Colonic mucosa (tissue), 4 donors: ENCODE measurements at regions of chr12 and their contacts with region 1.

Region 1: DNA sequence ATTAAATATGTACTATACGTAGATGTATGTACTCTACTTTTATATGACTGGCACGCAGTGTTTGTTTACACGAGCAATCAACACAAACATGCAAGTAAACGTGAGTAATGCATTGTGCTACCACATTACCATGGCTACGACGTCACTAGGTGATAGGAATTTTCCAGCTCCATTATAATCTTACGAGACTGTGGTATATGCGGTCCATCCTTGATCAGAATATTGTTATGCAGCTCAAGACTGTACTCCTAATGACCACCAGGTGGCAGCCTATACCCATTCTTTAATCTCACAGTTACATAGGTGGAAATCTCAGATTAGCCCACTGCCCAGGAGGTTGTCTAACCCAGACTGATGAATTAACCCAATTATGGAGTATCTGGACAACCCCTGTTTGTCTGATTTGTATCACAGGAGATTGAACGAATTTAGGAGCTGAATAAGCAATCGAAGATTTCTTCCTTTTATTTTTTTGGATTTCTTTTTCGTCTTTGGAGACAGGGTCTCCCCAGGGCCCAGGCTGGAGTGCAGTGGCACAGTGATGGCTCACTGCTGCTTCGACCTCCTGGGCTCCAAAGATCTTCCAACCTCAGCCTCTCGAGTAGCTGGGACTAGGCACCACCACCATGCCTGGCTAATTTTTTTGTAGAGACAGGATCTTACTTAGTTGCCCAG is 8.7 kb upstream of the TESPA1 start:
- DNase-seq: peak; percentile 50
- H3K4me3 ChIP-seq: no peak overlapping the region
- H3K27ac ChIP-seq: no peak overlapping the region
- H3K4me1 ChIP-seq: no peaks in the 10 kb centered on the region
- H3K27me3 ChIP-seq: no peaks in the 10 kb centered on the region
- CTCF ChIP-seq: peak; percentile 87

Region 2: GRCh38 chr12:55073043-55074022 is 80.0 kb after region 1 on chr12:
- intact Hi-C with region 1: loop called (anchors 2 kb)
- DNase-seq: peak; percentile 66
- H3K4me3 ChIP-seq: no peak overlapping the region
- H3K27ac ChIP-seq: no peak overlapping the region
- H3K4me1 ChIP-seq: no peaks in the 10 kb centered on the region
- H3K27me3 ChIP-seq: no peaks in the 10 kb centered on the region
- CTCF ChIP-seq: peak; percentile 80

Region 3: DNA sequence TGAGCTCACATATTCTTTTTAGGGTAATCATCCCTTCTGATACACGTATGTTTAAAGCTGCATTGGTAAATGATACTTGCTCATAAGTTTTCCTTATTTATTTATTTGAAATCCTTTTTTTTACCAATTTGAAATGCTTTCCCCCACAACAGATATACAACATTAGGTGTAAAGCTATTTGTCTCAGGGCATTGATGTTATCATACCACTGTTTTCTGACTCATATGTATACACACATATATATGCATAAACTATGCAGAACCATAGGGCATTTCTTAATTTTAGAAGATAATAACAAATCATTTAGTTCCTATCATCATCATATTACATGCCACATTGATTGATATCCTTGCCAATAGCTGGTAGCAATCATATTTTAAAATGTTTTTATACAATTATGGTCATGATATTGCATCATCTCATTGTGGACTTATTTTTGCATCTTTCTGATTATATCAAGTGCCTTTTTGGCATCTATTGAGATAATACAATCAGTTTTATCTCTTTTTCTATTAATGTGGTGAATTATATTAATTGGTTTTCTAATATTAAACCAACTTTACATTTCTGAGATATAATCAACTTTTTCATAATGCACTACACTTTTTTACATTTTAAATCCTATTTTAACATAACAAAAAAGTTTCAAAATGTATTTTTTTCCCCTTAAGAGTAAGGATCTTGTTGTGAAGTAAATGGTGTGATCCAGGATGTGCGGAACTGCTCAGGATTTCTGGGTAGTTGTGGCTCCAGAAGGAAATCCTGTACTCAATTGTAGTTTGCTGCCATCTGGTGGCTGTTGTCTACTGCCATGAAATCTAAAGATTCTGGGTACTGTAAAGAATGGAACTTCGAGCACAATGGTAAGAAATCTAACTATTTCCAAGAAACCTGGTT is 149.6 kb after region 1 on chr12:
- intact Hi-C with region 1: loop called (anchors 10 kb)
- DNase-seq: peak; percentile 46
- H3K4me3 ChIP-seq: no peak overlapping the region
- H3K27ac ChIP-seq: no peak overlapping the region
- H3K4me1 ChIP-seq: no peaks in the 10 kb centered on the region
- H3K27me3 ChIP-seq: no peaks in the 10 kb centered on the region
- CTCF ChIP-seq: peak; percentile 59

Region 4: DNA sequence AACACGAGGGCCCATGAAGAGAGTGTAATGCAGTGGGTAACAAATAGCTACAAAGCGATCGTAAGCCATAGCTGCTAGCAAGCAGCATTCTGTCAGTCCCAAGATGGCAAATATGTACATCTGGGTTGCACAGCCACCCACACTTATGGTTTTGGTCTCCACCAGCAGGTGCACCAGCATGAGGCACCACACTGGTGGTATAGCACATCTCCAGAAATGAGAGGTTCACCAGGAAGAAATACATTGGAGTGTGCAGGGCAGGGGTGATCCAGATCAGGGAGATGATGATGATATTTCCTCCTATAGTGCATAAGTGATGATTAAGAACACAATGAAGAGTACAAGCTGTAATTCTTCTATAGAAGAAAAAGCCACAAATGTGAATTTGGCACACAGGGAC is 201.1 kb after region 1 on chr12:
- intact Hi-C with region 1: no loop called
- DNase-seq: no peak
- H3K4me3 ChIP-seq: no peak overlapping the region
- H3K27ac ChIP-seq: no peak overlapping the region
- H3K4me1 ChIP-seq: no peaks in the 10 kb centered on the region
- H3K27me3 ChIP-seq: no peaks in the 10 kb centered on the region
- CTCF ChIP-seq: no peak